ENCODE measurements at regions of chr3 and their contacts with region 1.

Region 1: GRCh38 chr3:107235928-107236315 is 141.3 kb upstream of the CCDC54 start:
- DNase-seq: peak; percentile 82
- H3K4me3 ChIP-seq: peak overlapping the region; percentile 37
- H3K27ac ChIP-seq: no peak overlapping the region
- H3K4me1 ChIP-seq: peaks cover 22% of the 10 kb centered on the region
- CTCF ChIP-seq: peak; percentile 98

Region 2: GRCh38 chr3:107271787-107272387 is 36.0 kb after region 1 on chr3:
- CTCF ChIA-PET with region 1: interaction called, 3 read pairs
- POLR2A ChIA-PET with region 1: interaction called, 7 read pairs
- intact Hi-C with region 1: loop called (anchors 1 kb)
- DNase-seq: peak; percentile 66
- H3K4me3 ChIP-seq: no peak overlapping the region
- H3K27ac ChIP-seq: no peak overlapping the region
- H3K4me1 ChIP-seq: no peaks in the 10 kb centered on the region
- CTCF ChIP-seq: peak; percentile 92

Region 3: GRCh38 chr3:107429320-107430181 is 193.6 kb after region 1 on chr3:
- CTCF ChIA-PET with region 1: no interaction called
- POLR2A ChIA-PET with region 1: no interaction called
- intact Hi-C with region 1: loop called (anchors 2 kb)
- DNase-seq: peak; percentile 74
- H3K4me3 ChIP-seq: peak overlapping the region; percentile 19
- H3K27ac ChIP-seq: no peak overlapping the region
- H3K4me1 ChIP-seq: peaks cover 71% of the 10 kb centered on the region
- CTCF ChIP-seq: peak; percentile 88

Region 4: DNA sequence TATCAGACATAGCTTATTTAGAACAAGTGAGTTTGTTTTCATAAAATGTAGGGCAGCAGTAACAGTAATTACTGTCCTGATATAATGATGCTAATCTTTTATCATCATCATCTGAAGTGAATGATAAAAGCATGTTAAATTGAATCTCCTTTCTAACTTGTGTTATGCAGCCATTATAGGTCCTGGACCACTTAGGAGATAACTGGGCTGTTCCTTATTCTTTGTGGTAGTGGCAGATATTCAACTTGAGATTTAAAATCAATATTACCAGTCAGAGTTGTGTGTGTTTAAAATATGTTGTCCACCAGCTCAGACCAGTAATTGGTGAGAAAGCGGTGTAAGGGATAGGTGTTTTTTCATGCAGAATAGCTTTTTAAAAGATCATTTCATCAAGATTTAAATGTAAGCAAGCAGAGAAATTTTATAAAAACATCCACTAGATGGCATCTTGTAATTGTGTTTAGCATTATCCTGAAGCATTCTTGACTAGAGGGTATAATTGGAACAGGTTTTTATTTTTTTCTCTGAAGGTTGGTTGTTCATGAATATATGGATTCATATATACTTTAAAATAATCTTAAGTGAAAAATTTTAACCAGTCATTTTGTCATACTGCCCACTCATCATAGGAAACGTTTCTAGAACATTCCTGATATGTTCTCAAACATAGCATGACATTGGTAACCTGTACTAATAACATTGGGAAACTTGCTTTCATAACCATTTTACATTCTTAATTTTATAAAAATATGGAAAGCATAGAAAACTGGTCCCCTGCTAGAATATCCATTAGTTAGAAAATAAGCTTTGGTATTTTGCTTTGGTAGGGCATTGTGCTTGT is 440.8 kb after region 1 on chr3:
- CTCF ChIA-PET with region 1: no interaction called
- POLR2A ChIA-PET with region 1: no interaction called
- intact Hi-C with region 1: loop called (anchors 5 kb)
- DNase-seq: peak; percentile 63
- H3K4me3 ChIP-seq: no peak overlapping the region
- H3K27ac ChIP-seq: no peak overlapping the region
- H3K4me1 ChIP-seq: peaks cover 26% of the 10 kb centered on the region
- CTCF ChIP-seq: peak; percentile 90

Region 5: GRCh38 chr3:107846279-107846852 is 610.4 kb after region 1 on chr3:
- CTCF ChIA-PET with region 1: interaction called, 3 read pairs
- POLR2A ChIA-PET with region 1: no interaction called
- intact Hi-C with region 1: loop called (anchors 10 kb)
- DNase-seq: peak; percentile 39
- H3K4me3 ChIP-seq: no peak overlapping the region
- H3K27ac ChIP-seq: no peak overlapping the region
- H3K4me1 ChIP-seq: no peaks in the 10 kb centered on the region
- CTCF ChIP-seq: peak; percentile 81

Region 6: GRCh38 chr3:108477511-108478147 is 1241.7 kb after region 1 on chr3:
- CTCF ChIA-PET with region 1: no interaction called
- POLR2A ChIA-PET with region 1: no interaction called
- intact Hi-C with region 1: loop called (anchors 5 kb)
- DNase-seq: peak; percentile 64
- H3K4me3 ChIP-seq: no peak overlapping the region
- H3K27ac ChIP-seq: no peak overlapping the region
- H3K4me1 ChIP-seq: no peaks in the 10 kb centered on the region
- CTCF ChIP-seq: peak; percentile 92

Measured in OCI-LY7 (cell line).